GM13977 (cell line): ENCODE measurements at regions of chr3 and their contacts with region 1.

Region 1: DNA sequence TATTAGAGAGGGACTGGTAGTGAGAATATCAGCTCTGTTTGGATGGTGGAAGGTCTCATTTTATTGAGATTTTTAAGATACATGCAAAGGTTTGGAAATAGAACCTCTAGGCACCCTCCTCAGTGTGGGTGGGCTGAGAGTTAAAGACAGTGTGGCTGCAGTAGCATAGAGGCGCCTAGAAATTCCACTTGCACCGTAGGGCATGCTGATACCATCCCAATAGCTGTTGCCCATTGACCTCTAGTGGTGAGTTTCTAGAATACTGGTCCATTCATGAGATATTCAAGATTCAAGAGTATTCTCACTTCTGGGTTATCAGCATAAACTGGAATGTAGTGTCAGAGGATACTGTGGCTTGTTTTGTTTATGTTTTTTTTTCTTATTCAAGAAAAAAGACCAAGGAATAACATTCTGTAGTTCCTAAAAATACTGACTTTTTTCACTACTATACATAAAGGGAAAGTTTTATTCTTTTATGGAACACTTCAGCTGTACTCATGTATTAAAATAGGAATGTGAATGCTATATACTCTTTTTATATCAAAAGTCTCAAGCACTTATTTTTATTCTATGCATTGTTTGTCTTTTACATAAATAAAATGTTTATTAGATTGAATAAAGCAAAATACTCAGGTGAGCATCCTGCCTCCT is 87.2 kb downstream of the TGFBR2 start:
- DNase-seq: peak; percentile 47
- CTCF ChIP-seq: peak; percentile 79

Region 2: DNA sequence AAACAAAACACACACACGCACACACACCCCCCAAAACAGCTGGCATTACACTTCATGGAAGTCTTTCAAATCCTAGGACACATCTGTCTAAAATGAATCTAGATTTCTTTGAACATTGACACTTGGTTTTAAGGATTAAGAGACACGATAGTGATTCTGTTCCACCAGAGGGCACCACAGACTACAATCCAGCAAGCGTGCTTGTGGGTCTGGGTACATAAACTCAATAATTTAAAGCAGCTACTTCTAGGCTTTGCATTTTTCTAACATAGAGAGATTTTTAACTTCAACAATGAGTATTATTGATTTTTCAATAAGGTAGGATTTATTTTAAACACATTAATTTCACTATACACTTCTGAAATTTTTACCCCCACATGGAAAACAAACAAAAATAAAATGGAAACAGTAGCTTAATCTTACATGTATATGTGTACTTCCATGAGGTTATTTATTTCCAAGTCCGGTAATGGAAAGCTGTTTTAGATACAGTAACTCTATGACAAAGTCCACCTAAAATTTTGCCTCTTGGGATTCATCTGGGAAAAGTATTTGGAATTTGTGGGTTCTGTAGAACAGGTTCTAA is 651.2 kb before region 1 on chr3:
- in situ Hi-C with region 1: loop called (anchors 25 kb)
- DNase-seq: peak; percentile 25
- CTCF ChIP-seq: peak; percentile 64

Region 3: GRCh38 chr3:30221619-30222018 is 472.0 kb before region 1 on chr3:
- in situ Hi-C with region 1: loop called (anchors 25 kb)
- DNase-seq: no peak
- CTCF ChIP-seq: no peak